ENCODE measurements at regions of chr6 and their contacts with region 1.

Region 1: DNA sequence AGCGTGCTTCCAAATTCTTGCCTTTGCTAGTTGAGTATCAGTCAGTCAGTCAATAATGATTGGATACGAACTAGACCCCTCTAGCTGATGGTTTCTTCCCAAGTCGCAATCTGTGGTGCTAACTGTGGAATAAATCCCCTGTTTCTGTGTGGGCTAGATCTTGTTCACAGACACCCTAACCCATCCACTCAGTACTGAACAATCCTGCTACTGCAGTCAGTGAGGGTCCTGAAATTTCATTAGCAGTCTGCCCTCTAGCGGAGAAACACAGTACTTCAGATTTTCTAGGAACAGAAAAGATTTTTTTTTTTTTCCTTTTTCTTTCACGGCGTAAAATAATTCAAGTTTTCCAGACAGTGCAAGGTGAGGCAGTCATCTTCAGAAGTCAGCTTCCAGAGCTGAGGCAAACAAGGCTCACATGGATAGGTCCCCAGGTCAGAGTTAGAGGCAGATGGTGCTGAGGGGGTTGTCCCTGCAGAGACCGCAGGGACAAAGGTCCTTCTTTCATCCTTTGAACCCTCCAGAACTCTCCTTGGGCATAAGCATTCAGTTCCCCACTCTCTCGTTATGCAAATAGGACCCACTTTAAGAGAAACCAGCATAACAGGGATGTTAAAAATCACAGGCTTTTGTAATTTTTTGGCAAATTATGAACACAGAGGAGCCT is 119.6 kb downstream of the SCML4 start:
- DNase-seq: no peak
- H3K4me3 ChIP-seq: no peak overlapping the region
- CTCF ChIP-seq: peak; percentile 55

Region 2: DNA sequence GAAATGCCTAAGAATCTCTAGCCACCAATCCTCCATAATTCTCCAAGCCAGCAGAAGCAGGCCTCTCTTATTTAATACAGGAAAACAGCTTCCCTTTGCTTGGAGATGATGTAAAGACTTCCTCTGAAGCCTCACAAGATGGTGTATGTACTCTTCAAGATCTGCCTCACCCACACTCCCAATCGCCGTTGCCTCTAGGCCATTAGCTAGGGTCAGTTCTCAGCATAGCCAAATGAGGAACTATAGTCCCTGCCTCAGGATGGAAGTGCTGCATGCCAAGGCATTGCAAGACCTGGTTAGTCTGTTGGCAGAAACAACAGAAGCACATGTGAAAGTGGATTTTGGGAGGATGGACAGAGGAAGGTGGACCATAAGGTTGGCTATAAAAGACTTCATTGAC is 19.5 kb before region 1 on chr6:
- CTCF ChIA-PET with region 1: interaction called, 75 read pairs
- POLR2A ChIA-PET with region 1: no interaction called
- DNase-seq: no peak
- H3K4me3 ChIP-seq: no peak overlapping the region
- CTCF ChIP-seq: no peak

Region 3: GRCh38 chr6:107691062-107691751 is 13.3 kb before region 1 on chr6:
- CTCF ChIA-PET with region 1: interaction called, 75 read pairs
- POLR2A ChIA-PET with region 1: no interaction called
- DNase-seq: peak; percentile 94
- H3K4me3 ChIP-seq: no peak overlapping the region
- CTCF ChIP-seq: no peak

Region 4: DNA sequence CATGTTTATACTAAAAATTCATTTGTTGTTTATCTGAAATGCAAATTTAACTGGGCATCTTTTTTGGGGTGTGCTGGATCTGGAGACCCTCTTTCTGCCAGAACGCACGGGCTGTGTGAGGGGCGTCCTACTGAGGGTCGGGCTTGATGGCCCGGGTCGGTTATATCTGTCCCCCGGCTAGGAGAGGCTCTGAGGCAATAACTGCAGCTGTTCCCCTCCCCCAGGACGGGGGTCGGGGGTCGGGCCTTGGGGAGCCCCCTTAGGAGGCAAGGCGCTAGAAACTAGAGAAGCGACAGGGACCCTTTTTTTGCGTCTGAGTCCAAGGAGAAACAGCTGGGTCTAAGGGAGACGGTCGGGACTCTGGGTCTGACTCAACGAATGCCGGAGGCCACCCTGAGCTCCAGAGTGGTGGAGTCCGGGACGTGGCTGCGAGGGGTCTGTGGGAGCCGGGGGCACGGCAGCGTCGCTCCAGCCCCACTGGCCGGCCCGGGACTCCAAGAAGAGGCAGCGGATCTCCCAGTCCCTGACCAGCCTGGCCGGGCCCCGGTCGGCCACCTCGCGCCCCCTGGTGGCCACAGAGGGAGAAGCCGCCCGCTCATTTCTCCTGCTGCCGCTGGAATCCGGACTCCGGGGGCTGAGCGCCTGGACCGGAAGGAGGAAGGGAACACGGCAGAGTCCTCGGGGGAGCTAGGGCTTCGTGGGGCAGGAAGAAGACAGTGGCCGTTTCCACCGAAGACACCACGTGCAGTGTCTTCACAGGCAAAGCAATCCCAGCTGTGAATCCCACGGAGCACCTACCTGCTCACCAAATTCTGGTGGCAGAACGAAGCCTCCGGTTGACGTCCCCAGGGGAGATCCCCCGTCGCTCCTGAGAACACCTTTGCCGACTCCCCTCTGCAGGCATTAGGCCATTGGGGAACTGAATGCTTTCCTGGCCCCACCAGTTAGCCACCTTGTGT is 143.6 kb after region 1 on chr6:
- CTCF ChIA-PET with region 1: interaction called, 11 read pairs
- POLR2A ChIA-PET with region 1: no interaction called
- DNase-seq: no peak
- H3K4me3 ChIP-seq: peak overlapping the region; percentile 66
- CTCF ChIP-seq: peak; percentile 97

Measured in AG04449 (cell line).